A673 (cell line): ENCODE measurements at regions of chr6 and their contacts with region 1.

Region 1: DNA sequence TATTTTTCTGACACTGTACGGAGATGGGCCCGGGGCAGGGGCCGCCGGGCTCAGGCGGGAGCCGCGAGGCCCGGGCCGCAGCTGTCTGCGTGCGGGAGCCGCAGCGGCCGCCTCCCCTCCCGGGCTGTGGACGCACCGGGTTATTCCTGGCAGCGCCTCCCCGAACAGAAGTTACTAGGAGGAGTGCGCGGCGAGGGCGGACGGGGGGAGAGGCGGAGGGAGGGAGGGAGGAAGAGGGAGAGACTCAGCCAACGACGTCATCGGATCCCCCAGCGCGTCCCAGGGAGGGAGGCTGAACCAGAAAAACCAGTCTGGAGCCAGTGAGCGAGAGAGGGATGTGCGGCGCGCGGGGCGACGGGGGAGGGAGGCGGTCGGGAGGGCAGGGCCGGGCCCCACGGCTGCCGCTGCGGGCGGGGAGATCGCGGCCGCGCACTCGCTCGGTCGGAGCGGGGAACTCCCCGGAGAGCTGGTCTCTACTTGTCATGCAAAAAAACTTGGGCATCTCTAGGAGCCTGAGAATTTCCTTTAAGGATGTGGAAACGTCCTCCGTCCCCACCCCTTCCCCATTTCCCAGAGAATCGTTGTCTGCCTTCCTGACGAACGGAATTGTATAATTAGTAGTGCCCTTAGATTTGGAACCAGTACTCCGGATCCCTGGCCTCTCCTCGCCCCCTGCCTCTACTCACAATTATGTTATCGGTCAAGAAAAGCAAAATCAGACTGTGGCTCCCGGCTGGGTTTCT is 1.4 kb upstream of the HIVEP2 start:
- DNase-seq: peak; percentile 92
- H3K4me3 ChIP-seq: peak overlapping the region; percentile 66
- H3K27ac ChIP-seq: no peak overlapping the region
- H3K4me1 ChIP-seq: peaks cover 11% of the 10 kb centered on the region
- H3K27me3 ChIP-seq: peaks cover 6% of the 10 kb centered on the region
- CTCF ChIP-seq: no peak

Region 2: GRCh38 chr6:142592876-142593275 is 353.5 kb before region 1 on chr6:
- CTCF ChIA-PET with region 1: no interaction called
- POLR2A ChIA-PET with region 1: no interaction called
- intact Hi-C with region 1: no loop called
- DNase-seq: no peak
- H3K4me3 ChIP-seq: no peak overlapping the region
- H3K27ac ChIP-seq: no peak overlapping the region
- H3K4me1 ChIP-seq: no peaks in the 10 kb centered on the region
- H3K27me3 ChIP-seq: no peaks in the 10 kb centered on the region
- CTCF ChIP-seq: no peak

Region 3: GRCh38 chr6:142883011-142883410 is 63.3 kb before region 1 on chr6:
- CTCF ChIA-PET with region 1: no interaction called
- POLR2A ChIA-PET with region 1: no interaction called
- intact Hi-C with region 1: loop called (anchors 5 kb)
- DNase-seq: no peak
- H3K4me3 ChIP-seq: no peak overlapping the region
- H3K27ac ChIP-seq: no peak overlapping the region
- H3K4me1 ChIP-seq: peaks cover 3% of the 10 kb centered on the region
- H3K27me3 ChIP-seq: no peaks in the 10 kb centered on the region
- CTCF ChIP-seq: no peak

Region 4: DNA sequence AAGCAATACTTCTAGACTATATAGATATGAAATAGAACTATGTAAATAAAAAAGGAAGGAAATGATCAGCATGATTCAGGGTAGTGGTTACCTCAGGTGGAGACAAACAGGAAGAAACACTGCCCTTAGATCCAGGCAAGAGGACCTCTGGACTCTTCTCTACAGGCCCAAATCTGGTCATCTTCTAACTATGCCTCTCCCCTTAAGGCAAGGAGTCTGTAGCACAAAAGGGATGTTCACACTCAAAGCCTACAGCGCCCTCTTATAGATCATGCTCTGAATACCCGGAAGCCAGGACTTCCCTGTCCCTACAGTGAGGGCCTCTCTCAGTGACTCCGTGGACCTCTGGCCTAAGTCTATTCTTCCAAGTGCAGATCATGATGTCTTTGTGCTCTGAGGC is 29.0 kb after region 1 on chr6:
- CTCF ChIA-PET with region 1: no interaction called
- POLR2A ChIA-PET with region 1: no interaction called
- intact Hi-C with region 1: no loop called
- DNase-seq: no peak
- H3K4me3 ChIP-seq: no peak overlapping the region
- H3K27ac ChIP-seq: no peak overlapping the region
- H3K4me1 ChIP-seq: no peaks in the 10 kb centered on the region
- H3K27me3 ChIP-seq: no peaks in the 10 kb centered on the region
- CTCF ChIP-seq: no peak

Region 5: GRCh38 chr6:143098054-143098671 is 151.8 kb after region 1 on chr6:
- CTCF ChIA-PET with region 1: no interaction called
- POLR2A ChIA-PET with region 1: no interaction called
- intact Hi-C with region 1: no loop called
- DNase-seq: no peak
- H3K4me3 ChIP-seq: no peak overlapping the region
- H3K27ac ChIP-seq: no peak overlapping the region
- H3K4me1 ChIP-seq: no peaks in the 10 kb centered on the region
- H3K27me3 ChIP-seq: no peaks in the 10 kb centered on the region
- CTCF ChIP-seq: no peak

Region 6: GRCh38 chr6:143419526-143419925 is 473.2 kb after region 1 on chr6:
- CTCF ChIA-PET with region 1: no interaction called
- POLR2A ChIA-PET with region 1: no interaction called
- intact Hi-C with region 1: no loop called
- DNase-seq: no peak
- H3K4me3 ChIP-seq: no peak overlapping the region
- H3K27ac ChIP-seq: no peak overlapping the region
- H3K4me1 ChIP-seq: no peaks in the 10 kb centered on the region
- H3K27me3 ChIP-seq: no peaks in the 10 kb centered on the region
- CTCF ChIP-seq: no peak